Activated T-helper 1 cell treated with anti-CD3 and anti-CD28 coated beads, Interleukin-12 subunit alpha, Interleukin-12 subunit beta, Interleukin-2, Interleukin-4 antibody, amounts not matched to agents 30 ng/mL and 10 ng/mL and 1 ng/mL, durations not matched to agents 14 hours and 24 hours and 36 hours (primary cell): ENCODE measurements at regions of chr2 and their contacts with region 1.

Region 1: GRCh38 chr2:73907840-73908452 is 15.1 kb downstream of the ACTG2 start:
- DNase-seq: no peak
- H3K4me3 Mint-ChIP-seq: no peak overlapping the region
- H3K27ac Mint-ChIP-seq: no peak overlapping the region
- H3K4me1 Mint-ChIP-seq: peaks cover 9% of the 10 kb centered on the region
- H3K27me3 Mint-ChIP-seq: no peaks in the 10 kb centered on the region

Region 2: DNA sequence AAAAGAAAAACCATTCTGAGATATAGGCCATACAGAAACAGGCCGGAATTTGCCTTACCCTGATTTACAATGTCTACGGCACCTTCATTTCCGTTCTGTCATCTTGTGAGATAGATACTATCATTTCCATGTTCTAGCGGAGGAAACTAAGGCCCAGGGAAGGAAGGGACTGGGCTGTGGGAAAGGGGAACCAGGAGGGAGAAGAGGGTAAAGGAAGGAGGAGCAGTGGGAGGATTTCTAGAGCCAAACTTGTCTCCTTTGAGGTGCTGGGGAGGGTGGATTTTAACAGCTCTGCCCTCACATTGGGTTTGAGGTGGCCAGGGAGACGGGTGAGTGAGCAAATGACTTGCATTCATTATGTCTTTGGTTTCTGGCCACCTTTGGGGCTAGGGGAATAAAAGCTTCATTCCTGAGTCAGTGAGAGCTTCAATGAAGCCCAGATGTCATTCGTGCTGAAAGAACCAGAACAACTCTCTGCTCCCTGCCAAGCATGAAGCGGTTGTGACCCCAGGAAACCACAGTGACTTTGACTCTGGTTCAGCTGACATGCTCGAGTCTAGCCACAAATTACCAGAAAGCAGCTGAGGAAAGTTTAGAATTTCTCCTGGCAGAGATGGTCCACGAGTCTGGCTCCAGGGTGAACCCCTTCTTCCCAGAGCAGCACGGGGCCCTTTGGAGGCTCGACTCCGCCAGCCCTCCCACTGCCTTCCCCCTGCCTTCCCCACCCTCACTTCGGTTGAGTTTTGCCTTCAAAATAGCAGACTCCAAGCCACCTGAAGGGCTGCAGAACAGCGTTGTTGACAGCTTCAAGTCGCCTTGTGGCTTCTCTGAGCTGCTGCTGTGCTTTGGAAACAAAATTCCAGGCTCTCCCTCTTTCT is 11.3 kb before region 1 on chr2:
- intact Hi-C with region 1: loop called (anchors 1 kb)
- DNase-seq: peak; percentile 22
- H3K4me3 Mint-ChIP-seq: peak overlapping the region; percentile 54
- H3K27ac Mint-ChIP-seq: peak overlapping the region; percentile 90
- H3K4me1 Mint-ChIP-seq: peaks cover 43% of the 10 kb centered on the region
- H3K27me3 Mint-ChIP-seq: peaks cover 2% of the 10 kb centered on the region

Region 3: DNA sequence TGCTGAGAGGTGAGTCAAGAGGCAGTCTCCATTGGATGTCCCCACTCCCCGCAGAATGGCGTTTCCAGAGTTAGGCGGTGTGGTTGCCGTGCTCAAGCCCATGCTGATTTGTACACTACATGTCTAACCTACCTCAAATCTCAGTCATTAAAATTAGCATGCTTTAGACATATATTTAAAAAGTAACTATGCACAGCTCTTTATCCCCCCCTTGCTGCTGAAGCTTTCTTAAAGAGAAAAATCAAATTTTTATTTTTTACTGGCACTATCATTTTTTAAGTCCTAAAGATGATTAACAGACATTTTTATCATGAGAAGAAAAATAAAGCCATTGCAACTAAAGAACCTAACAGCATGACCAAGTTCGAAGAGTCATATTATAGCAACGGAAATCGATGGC is 196.9 kb after region 1 on chr2:
- intact Hi-C with region 1: loop called (anchors 1 kb)
- DNase-seq: no peak
- H3K4me3 Mint-ChIP-seq: no peak overlapping the region
- H3K27ac Mint-ChIP-seq: no peak overlapping the region
- H3K4me1 Mint-ChIP-seq: no peaks in the 10 kb centered on the region
- H3K27me3 Mint-ChIP-seq: no peaks in the 10 kb centered on the region